ENCODE measurements at regions of chr6 and their contacts with region 1.

Region 1: GRCh38 chr6:119541132-119541905 is 191.8 kb upstream of the MAN1A1 start:
- DNase-seq: peak; percentile 91
- ATAC-seq: peak; percentile 96
- H3K4me3 ChIP-seq: peak overlapping the region; percentile 7; the same call in 1 of the 2 replicates
- H3K27ac ChIP-seq: peak overlapping the region; percentile 98
- H3K4me1 ChIP-seq: peaks cover 20% of the 10 kb centered on the region
- H3K27me3 ChIP-seq: no peaks in the 10 kb centered on the region
- CTCF ChIP-seq: no peak

Region 2: DNA sequence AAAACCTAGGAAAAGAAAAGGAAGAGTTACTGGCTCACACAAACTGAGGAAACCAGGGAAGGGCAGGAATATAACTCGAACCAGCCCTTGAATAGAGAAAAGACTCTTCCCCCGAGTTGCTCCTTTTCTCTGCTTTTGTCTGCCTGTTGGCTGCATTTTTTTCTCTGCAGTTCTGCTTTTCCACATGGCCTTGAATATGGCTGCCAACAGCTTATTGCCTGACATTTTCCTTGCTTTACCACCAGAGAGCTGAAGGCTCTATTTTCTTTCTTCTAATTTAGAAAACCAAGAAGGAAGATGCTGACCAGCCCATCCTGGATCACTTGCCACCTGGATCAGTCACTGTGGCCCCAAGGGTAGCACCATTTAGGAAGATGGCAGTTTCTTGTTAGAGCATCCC is 27.0 kb before region 1 on chr6:
- CTCF ChIA-PET with region 1: no interaction called
- POLR2A ChIA-PET with region 1: no interaction called
- intact Hi-C with region 1: no loop called
- DNase-seq: no peak
- ATAC-seq: no peak
- H3K4me3 ChIP-seq: no peak overlapping the region
- H3K27ac ChIP-seq: no peak overlapping the region
- H3K4me1 ChIP-seq: no peaks in the 10 kb centered on the region
- H3K27me3 ChIP-seq: no peaks in the 10 kb centered on the region
- CTCF ChIP-seq: no peak

Region 3: GRCh38 chr6:119602215-119603178 is 61.2 kb after region 1 on chr6:
- CTCF ChIA-PET with region 1: no interaction called
- POLR2A ChIA-PET with region 1: no interaction called
- intact Hi-C with region 1: loop called (anchors 1 kb)
- DNase-seq: peak; percentile 55
- ATAC-seq: peak; percentile 46; the same call in 1 of the 2 replicates
- H3K4me3 ChIP-seq: no peak overlapping the region
- H3K27ac ChIP-seq: peak overlapping the region; percentile 44
- H3K4me1 ChIP-seq: peaks cover 16% of the 10 kb centered on the region
- H3K27me3 ChIP-seq: no peaks in the 10 kb centered on the region
- CTCF ChIP-seq: no peak

Region 4: DNA sequence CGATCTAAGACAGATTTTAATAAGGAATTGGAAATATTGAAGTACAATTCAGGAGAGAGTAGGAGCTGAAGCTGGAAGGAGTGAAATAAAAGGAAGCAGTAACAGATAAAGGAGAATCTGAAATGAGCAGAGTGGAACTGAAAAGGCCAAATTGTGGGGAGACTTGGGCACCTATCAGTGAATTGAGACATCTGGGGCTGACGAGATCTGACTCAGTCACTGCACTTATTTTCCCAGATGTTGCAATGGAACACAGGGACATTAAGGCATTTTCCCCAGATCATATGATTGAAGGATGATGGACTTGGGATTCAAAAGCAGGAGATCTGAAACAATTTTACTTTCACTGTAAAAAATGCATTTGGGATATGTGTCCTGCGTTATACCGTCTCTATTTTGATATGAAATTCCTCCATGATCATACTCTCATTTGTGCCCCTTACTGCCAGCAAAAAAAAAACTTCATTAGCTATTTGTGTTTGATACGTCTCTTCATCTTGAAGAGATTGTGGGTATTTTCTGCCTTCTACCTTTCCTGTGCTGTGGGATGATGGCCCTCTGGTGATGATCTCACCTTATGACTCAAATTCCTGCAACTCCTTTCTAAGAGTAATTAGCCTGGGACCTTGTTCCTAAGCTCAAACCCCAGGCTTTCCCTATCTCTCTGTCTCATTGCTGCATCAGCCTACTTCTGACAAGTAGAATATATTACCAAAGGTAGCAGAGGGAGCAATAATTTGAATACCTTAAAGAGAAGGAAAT is 86.8 kb after region 1 on chr6:
- CTCF ChIA-PET with region 1: no interaction called
- POLR2A ChIA-PET with region 1: no interaction called
- intact Hi-C with region 1: loop called (anchors 2 kb)
- DNase-seq: peak; percentile 71
- ATAC-seq: peak; percentile 78
- H3K4me3 ChIP-seq: peak overlapping the region; percentile 7; the same call in 1 of the 2 replicates
- H3K27ac ChIP-seq: peak overlapping the region; percentile 93
- H3K4me1 ChIP-seq: peaks cover 31% of the 10 kb centered on the region
- H3K27me3 ChIP-seq: no peaks in the 10 kb centered on the region
- CTCF ChIP-seq: peak; percentile 32; the same call in 1 of the 2 replicates